Activated T-helper 2 cell treated with anti-CD3 and anti-CD28 coated beads, Interferon-gamma antibody, Interleukin-2, Interleukin-4, amounts not matched to agents 10 μg/mL and 5 μg/mL and 100 μg/mL, durations not matched to agents 14 hours and 24 hours and 36 hours (primary cell): ENCODE measurements at regions of chr7 and their contacts with region 1.

Region 1: DNA sequence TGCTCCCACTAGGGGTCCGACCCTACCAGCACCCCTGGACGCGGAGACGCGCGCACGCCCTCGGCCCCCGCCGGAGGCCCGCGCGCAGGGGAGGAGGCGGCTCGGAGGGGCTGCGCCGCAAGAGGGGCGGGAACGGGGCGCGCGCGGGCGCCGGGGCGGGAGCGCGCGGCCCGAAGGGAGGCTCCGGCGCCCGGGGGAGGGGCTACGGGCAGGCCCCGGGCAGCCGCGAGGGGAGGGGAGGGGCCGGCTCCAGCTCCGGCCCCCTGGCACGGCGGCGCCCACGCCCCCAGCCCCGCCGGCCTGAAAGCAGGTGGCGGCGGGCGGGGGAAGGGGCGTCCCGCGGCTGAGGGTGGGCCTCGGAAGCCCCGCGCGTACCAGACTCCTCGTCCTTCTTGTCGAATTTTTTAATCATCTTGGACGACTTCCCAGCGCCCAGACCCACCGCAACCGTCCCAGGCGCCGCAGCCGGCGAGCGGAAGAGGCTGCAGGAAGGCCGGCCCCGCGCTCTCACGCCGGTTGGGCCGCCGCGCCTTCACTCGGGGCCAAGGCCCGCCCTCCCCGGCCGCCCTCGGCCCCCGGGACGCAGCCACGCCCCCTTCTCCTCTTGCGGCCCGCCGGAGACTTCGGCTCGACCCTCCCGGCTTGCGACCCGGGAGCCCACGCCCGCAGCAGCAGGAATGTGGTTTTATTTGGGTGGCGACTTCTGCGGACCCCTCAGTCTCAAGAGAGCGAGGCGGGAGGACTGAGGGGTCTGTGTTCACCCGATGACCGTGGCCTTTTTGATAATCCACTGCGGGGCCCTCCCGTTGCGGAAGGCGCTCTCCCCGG is at the start of gene COPG2:
- DNase-seq: peak; percentile 71
- H3K4me3 Mint-ChIP-seq: peak within 1 kb of the TSS; percentile 87
- H3K27ac Mint-ChIP-seq: peak within 1 kb of the TSS; percentile 61
- H3K4me1 Mint-ChIP-seq: peaks cover 19% of the 10 kb centered on the region
- H3K27me3 Mint-ChIP-seq: peaks cover 12% of the 10 kb centered on the region
- total RNA-seq, gene COPG2: 26.7 and 27.4 TPM in 2 replicates

Region 2: DNA sequence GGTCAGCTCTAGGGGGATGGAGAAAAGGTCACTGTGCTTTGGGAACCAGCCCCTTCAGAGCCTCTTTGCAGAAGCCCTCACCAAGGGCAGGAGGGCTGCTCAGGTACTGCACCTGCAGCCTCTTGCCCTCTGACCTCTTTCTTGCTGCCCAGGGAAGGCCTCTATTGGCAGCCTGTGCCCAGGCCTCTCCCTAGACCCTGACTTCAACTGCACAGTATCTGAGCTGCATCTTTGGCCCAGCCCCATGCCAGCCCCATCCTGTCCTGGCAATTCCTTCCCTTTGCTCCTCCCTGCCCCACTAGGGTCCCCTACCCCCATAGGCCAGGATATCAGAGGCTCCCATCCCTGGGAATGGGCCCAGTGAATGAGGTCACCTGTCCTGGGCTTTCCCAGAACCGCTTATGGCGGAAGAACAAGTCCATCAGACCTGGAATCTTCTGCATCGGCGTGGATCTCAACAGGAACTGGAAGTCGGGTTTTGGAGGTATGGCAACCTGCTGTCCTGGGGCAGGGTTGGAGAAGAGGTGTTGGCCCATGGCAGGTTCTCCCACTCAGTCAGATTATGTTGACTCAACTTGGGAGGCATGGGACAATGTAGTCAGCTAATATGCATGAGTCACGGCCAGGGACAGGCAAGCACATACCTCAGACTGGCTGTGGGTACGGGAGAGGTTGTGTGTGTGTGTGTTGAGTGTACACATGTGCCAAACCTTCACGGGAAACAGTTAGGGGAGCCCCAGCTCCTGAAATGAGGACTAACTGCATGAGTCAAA is 305.3 kb before region 1 on chr7:
- intact Hi-C with region 1: loop called (anchors 1 kb)
- DNase-seq: no peak
- H3K4me3 Mint-ChIP-seq: no peak overlapping the region
- H3K27ac Mint-ChIP-seq: peak overlapping the region; percentile 80
- H3K4me1 Mint-ChIP-seq: peaks cover 16% of the 10 kb centered on the region
- H3K27me3 Mint-ChIP-seq: no peaks in the 10 kb centered on the region

Region 3: GRCh38 chr7:130649004-130649790 is 19.3 kb before region 1 on chr7:
- intact Hi-C with region 1: loop called (anchors 1 kb)
- DNase-seq: no peak
- H3K4me3 Mint-ChIP-seq: peak overlapping the region; percentile 30
- H3K27ac Mint-ChIP-seq: peak overlapping the region; percentile 89
- H3K4me1 Mint-ChIP-seq: peaks cover 37% of the 10 kb centered on the region
- H3K27me3 Mint-ChIP-seq: no peaks in the 10 kb centered on the region